Kidney (tissue), 22 donors: ENCODE measurements at regions of chr7 and their contacts with region 1.

Region 1: GRCh38 chr7:121945066-121945848 is 72.3 kb downstream of the PTPRZ1 start:
- DNase-seq: no peak
- H3K4me3 ChIP-seq: no peak overlapping the region
- H3K27ac ChIP-seq: no peak overlapping the region
- H3K4me1 ChIP-seq: no peaks in the 10 kb centered on the region
- H3K27me3 ChIP-seq: no peaks in the 10 kb centered on the region
- CTCF ChIP-seq: no peak

Region 2: DNA sequence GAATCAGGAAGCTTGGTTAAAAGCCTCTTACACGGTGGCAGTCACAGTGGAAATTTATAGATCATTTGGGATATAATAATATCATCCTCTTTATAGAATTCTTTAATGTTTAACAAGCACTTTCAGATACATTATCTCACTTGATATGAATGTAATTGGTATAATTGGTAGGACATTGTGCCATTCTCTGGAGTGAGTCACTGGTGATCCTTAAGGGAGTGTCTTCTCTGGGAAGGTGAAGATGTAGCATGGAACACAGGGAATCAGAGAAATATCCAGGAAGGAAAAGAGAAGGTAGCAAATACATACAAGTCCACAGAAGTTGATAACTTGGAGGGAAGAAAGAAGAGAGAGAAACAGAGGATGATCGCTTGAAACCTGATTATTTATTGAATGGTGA is 62.5 kb before region 1 on chr7:
- intact Hi-C with region 1: loop called (anchors 10 kb)
- DNase-seq: no peak
- H3K4me3 ChIP-seq: no peak overlapping the region
- H3K27ac ChIP-seq: no peak overlapping the region
- H3K4me1 ChIP-seq: no peaks in the 10 kb centered on the region
- H3K27me3 ChIP-seq: no peaks in the 10 kb centered on the region
- CTCF ChIP-seq: no peak